Calu3 (cell line): ENCODE measurements at regions of chr10 and their contacts with region 1.

Region 1: GRCh38 chr10:27783660-27784059 is 38.0 kb upstream of the MKX start:
- DNase-seq: peak; percentile 59
- H3K4me3 Mint-ChIP-seq: no peak overlapping the region
- H3K27ac Mint-ChIP-seq: no peak overlapping the region
- H3K4me1 Mint-ChIP-seq: peaks cover 8% of the 10 kb centered on the region
- H3K27me3 Mint-ChIP-seq: peaks cover 21% of the 10 kb centered on the region
- CTCF ChIP-seq: peak; percentile 40

Region 2: DNA sequence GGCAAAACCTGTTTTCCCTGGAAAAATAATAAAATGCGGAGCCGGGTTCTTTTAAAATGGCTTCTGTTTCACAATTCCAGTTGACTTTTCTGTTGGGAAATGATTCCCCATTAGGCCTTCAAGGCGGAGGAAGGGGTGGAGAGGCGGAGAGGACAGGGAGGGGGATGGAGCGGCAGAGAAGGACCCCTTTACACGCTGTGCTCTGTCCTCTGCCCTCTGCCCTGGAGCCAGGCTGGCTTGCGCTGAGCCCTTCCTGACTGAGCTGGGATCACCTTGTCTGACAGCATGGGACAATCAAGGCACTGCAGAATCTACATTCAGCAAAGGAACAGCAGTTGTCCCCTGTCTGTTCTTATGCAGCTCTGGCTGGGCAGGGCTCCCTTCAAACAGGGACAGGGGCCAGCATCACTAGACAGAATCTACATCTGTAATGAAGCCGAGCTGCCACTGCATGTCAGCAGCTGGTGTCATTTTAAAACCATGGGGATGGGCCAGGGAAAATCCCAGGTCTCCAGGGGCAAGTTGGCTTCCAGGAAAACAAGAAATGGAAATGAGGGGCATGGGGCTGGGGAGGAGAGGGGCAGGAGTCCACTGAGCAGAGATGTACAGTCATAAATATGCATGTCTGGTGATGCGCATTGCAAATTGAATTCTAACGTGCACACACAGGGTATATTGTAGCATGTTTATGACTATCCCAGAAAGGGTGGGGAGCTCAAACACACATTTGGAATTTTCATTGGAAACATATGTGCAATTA is 158.0 kb before region 1 on chr10:
- CTCF ChIA-PET with region 1: interaction called, 11 read pairs
- intact Hi-C with region 1: no loop called
- DNase-seq: no peak
- H3K4me3 Mint-ChIP-seq: no peak overlapping the region
- H3K27ac Mint-ChIP-seq: no peak overlapping the region
- H3K4me1 Mint-ChIP-seq: no peaks in the 10 kb centered on the region
- H3K27me3 Mint-ChIP-seq: peaks cover 53% of the 10 kb centered on the region
- CTCF ChIP-seq: no peak

Region 3: DNA sequence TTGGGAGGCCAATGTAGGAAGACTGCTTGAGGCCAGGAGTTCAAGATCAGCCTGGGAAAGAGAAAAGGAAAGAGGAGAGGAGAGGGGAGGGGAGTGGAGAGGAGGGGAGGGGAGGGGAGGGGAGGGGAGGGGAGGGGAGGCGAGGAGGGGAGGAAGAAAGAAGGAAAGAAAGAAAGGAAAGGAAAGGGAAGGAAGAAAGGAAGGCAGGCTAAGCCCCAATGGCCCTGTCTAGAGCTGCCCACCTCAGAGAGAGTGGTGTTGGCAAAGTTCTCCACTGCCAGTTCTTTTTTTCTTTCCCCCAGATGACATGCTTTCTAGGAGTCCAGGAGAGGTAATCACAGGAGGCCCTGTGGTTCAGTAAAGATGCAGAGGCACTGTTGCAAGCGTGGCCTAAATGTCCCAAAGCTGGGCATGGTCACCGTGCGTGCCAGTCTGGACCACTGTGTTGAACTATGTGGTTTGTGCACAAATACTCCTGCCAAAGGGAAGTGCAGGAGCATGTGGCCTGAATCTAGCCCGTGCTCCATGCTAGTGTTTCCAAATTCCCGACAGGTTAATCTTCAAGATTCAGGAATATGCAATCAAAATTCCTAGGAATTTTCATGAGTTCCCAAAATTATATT is 175.5 kb after region 1 on chr10:
- CTCF ChIA-PET with region 1: no interaction called
- intact Hi-C with region 1: loop called (anchors 10 kb)
- DNase-seq: no peak
- H3K4me3 Mint-ChIP-seq: no peak overlapping the region
- H3K27ac Mint-ChIP-seq: no peak overlapping the region
- H3K4me1 Mint-ChIP-seq: no peaks in the 10 kb centered on the region
- H3K27me3 Mint-ChIP-seq: no peaks in the 10 kb centered on the region
- CTCF ChIP-seq: no peak

Region 4: GRCh38 chr10:28137907-28138880 is 354.5 kb after region 1 on chr10:
- CTCF ChIA-PET with region 1: no interaction called
- intact Hi-C with region 1: loop called (anchors 1 kb)
- DNase-seq: no peak
- H3K4me3 Mint-ChIP-seq: no peak overlapping the region
- H3K27ac Mint-ChIP-seq: no peak overlapping the region
- H3K4me1 Mint-ChIP-seq: peaks cover 11% of the 10 kb centered on the region
- H3K27me3 Mint-ChIP-seq: no peaks in the 10 kb centered on the region
- CTCF ChIP-seq: no peak

Region 5: DNA sequence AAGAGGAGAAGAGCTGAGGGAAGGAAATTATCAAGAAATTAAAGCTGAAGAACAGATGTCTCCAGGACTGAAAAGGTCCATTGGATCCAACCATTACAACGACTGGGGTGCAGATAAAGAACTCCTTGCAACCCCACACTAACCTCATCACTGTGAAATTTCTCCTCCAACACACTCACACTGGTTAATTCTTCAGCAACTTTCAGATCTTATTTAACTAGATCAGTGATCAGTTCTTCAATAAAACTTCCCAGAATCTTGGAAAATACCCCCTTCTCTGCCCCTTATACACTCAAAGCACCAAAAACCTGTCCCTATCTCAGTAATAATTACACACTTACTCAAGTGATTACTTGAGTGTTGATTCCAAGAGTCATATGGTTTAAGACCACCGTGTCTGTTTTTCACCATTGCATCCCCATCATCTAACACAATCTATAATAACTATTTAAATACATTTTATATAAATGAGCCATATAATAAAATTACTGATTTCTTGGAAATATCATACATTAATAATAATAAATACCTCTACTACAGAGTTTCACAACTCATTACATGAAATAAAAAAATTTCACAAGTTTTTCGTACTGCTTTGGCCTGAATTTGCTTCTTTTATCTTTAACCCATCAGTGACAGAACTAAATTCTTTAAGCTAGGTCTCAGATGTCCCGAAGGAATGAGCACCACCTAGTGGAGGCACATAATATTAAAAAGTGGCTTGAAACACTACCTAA is 395.5 kb after region 1 on chr10:
- CTCF ChIA-PET with region 1: interaction called, 15 read pairs
- intact Hi-C with region 1: loop called (anchors 1 kb)
- DNase-seq: peak; percentile 57
- H3K4me3 Mint-ChIP-seq: peak overlapping the region; percentile 3
- H3K27ac Mint-ChIP-seq: peak overlapping the region; percentile 23
- H3K4me1 Mint-ChIP-seq: peaks cover 17% of the 10 kb centered on the region
- H3K27me3 Mint-ChIP-seq: no peaks in the 10 kb centered on the region
- CTCF ChIP-seq: peak; percentile 60